Activated CD4-positive, alpha-beta T cell treated with anti-CD3 and anti-CD28 coated beads, Interleukin-2, amount 10 ng/mL, durations not matched to agents 24 days and 14 days (primary cell): ENCODE measurements at regions of chr4 and their contacts with region 1.

Region 1: GRCh38 chr4:122458625-122459024 is 2.1 kb upstream of the IL2 start:
- DNase-seq: peak; percentile 83
- H3K4me3 Mint-ChIP-seq: peak overlapping the region; percentile 81
- H3K27ac Mint-ChIP-seq: peak overlapping the region; percentile 88
- H3K4me1 Mint-ChIP-seq: peaks cover 35% of the 10 kb centered on the region
- H3K27me3 Mint-ChIP-seq: no peaks in the 10 kb centered on the region

Region 2: DNA sequence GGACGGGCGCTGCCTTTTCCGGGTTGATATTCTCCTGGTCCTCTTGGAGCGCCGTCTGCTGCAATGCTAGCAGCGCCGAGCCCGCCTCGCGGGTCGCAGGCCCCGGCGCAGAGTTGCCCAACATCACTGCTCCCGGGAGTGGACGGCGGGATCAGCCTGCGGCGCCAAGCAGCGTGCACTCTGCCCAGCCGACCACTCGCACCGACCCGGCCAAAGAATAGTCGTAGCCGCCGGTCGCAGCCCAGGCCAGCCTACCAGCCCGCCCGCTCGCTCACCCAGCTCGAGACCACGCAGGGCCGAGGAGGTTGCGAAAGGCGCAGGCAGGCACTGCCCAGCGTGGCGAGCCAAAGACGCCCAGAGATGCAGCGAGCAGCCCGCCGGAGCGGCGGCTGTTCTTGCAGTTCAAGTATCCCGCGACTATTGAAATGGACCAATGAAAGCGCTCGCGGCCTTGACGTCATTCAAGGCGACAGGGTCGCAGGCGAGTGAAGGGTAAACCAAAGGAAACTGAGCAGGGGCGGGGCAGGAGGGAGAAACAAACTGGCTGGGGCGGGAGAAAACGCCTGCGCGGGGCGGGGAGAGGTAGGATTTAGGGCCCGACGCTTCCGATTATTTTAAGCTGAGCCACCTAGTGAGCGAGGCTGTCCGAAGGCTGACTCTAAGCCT is 635.0 kb before region 1 on chr4 and contains the start of gene CCNA2:
- intact Hi-C with region 1: loop called (anchors 5 kb)
- DNase-seq: peak; percentile 99
- H3K4me3 Mint-ChIP-seq: peak within 1 kb of the TSS; percentile 98
- H3K27ac Mint-ChIP-seq: peak within 1 kb of the TSS; percentile 97
- H3K4me1 Mint-ChIP-seq: peaks cover 31% of the 10 kb centered on the region
- H3K27me3 Mint-ChIP-seq: no peaks in the 10 kb centered on the region
- total RNA-seq, gene CCNA2: 72.0 and 73.4 TPM in 2 replicates

Region 3: GRCh38 chr4:122469457-122469856 is 10.8 kb after region 1 on chr4:
- intact Hi-C with region 1: loop called (anchors 1 kb)
- DNase-seq: no peak
- H3K4me3 Mint-ChIP-seq: no peak overlapping the region
- H3K27ac Mint-ChIP-seq: no peak overlapping the region
- H3K4me1 Mint-ChIP-seq: peaks cover 2% of the 10 kb centered on the region
- H3K27me3 Mint-ChIP-seq: no peaks in the 10 kb centered on the region

Region 4: GRCh38 chr4:122542411-122543236 is 84.0 kb after region 1 on chr4:
- intact Hi-C with region 1: loop called (anchors 1 kb)
- DNase-seq: peak; percentile 69
- H3K4me3 Mint-ChIP-seq: peak overlapping the region; percentile 78
- H3K27ac Mint-ChIP-seq: peak overlapping the region; percentile 94
- H3K4me1 Mint-ChIP-seq: peaks cover 80% of the 10 kb centered on the region
- H3K27me3 Mint-ChIP-seq: no peaks in the 10 kb centered on the region

Region 5: DNA sequence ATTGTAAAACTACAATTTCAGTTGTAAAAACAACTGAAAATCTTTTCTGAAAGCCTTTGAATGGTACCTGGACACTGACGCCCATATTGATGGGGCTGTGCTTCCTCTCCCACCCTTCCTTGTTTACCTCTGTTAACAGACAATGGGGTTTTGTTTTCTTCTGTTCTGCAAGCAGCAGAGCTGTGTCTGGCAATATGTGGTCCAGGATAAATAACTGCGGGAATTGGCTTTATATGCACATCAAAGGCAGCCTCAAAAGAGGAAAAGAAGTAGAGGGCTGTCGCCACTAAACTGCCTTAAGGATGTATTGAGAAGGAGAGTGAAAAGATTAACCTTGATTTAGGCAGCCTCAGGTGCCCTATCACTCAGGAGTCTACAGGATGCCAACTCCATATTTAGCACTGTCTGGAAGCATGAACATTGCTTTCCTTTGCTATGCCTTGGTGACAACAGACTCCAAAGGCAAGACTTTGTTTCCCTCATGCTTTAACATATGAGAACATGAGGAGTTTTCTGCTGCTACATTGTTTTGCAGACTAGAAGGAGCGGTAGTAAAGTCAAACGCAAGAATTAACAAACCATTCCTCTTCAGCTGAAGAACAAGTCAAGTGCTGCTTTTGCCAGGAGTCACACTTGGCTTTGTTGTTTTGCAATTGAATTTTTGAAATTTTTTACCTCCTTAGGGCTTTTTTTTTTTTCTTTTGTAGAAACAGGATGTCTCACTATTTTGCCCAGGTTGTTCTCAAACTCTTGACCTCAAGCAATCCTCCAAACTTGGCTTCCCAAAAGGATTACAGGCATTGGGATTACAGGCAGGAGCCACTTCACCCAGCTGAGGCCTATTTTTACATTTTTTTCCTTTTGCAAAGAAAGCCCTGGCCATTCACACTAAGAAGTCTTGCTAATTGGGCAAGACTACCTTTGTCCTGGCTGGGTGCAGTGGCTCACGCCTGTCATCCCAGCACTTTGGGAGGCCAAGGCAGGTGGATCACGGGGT is 159.3 kb after region 1 on chr4:
- intact Hi-C with region 1: loop called (anchors 1 kb)
- DNase-seq: peak; percentile 58
- H3K4me3 Mint-ChIP-seq: peak overlapping the region; percentile 89
- H3K27ac Mint-ChIP-seq: peak overlapping the region; percentile 91
- H3K4me1 Mint-ChIP-seq: peaks cover 50% of the 10 kb centered on the region
- H3K27me3 Mint-ChIP-seq: no peaks in the 10 kb centered on the region

Region 6: GRCh38 chr4:122710434-122711308 is 252.0 kb after region 1 on chr4:
- intact Hi-C with region 1: loop called (anchors 2 kb)
- DNase-seq: peak; percentile 80
- H3K4me3 Mint-ChIP-seq: peak overlapping the region; percentile 84
- H3K27ac Mint-ChIP-seq: peak overlapping the region; percentile 98
- H3K4me1 Mint-ChIP-seq: peaks cover 64% of the 10 kb centered on the region
- H3K27me3 Mint-ChIP-seq: no peaks in the 10 kb centered on the region